Activated CD4-positive, alpha-beta memory T cell treated with anti-CD3 and anti-CD28 coated beads for 36 hours (primary cell): ENCODE measurements at regions of chr4 and their contacts with region 1.

Region 1: DNA sequence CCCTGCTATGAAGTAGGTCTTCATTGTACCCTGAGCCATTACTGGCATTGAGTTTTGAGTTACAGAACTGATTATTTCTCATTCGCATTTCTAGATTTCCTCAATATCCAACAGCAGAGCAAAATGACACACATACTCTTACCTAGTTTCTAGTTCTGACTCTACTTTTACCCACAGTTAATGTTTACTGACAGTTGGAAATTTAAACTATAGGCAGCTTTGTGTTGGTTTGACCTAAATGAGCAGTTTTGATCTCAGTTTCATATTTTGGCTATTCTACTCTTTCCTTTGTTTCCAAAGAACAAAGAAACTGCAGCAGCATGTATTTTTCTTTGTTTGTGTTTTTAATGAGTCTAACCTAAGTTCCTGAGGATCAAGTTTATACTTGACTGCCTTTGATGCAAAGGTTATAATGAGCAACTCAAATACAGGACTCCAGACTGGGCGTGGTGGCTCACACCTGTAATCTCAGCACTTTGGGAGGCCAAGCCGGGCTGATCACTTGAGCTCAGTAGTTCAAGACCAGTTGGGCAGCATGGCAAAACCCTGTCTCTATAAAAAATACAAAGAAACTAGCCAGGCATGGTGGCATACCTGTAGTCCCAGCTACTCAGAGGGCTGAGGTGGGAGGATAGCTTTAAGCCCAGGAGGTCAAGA is 30.4 kb downstream of the TXK start:
- DNase-seq: peak; percentile 60
- H3K4me3 Mint-ChIP-seq: no peak overlapping the region
- H3K27ac Mint-ChIP-seq: peak overlapping the region; percentile 83
- H3K4me1 Mint-ChIP-seq: peaks cover 30% of the 10 kb centered on the region
- H3K27me3 Mint-ChIP-seq: no peaks in the 10 kb centered on the region

Region 2: DNA sequence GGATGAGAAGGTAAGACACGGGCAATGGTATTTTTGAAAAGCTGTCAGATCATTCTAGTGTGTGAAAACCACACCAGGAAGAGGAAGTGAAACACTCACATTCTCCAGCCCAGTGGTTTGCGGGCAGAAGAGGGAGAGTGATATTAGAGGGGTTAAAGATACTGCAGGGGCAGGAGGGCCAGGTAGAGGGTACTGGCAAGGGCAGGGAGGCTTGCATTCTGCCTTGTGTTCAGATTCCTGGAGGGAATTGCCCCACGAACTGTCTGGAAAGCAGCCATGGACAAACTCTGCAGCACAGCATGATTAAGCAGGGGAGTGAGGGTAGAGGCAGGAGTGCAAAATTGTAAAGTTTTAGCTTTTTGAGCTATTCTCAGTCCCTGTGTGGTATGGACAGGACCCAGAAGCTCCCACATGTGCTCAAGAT is 56.2 kb before region 1 on chr4:
- CTCF ChIA-PET with region 1: interaction called, 5 read pairs
- POLR2A ChIA-PET with region 1: no interaction called
- intact Hi-C with region 1: loop called (anchors 1 kb)
- DNase-seq: peak; percentile 91
- H3K4me3 Mint-ChIP-seq: no peak overlapping the region
- H3K27ac Mint-ChIP-seq: peak overlapping the region; percentile 15
- H3K4me1 Mint-ChIP-seq: peaks cover 52% of the 10 kb centered on the region
- H3K27me3 Mint-ChIP-seq: peaks cover 34% of the 10 kb centered on the region

Region 3: DNA sequence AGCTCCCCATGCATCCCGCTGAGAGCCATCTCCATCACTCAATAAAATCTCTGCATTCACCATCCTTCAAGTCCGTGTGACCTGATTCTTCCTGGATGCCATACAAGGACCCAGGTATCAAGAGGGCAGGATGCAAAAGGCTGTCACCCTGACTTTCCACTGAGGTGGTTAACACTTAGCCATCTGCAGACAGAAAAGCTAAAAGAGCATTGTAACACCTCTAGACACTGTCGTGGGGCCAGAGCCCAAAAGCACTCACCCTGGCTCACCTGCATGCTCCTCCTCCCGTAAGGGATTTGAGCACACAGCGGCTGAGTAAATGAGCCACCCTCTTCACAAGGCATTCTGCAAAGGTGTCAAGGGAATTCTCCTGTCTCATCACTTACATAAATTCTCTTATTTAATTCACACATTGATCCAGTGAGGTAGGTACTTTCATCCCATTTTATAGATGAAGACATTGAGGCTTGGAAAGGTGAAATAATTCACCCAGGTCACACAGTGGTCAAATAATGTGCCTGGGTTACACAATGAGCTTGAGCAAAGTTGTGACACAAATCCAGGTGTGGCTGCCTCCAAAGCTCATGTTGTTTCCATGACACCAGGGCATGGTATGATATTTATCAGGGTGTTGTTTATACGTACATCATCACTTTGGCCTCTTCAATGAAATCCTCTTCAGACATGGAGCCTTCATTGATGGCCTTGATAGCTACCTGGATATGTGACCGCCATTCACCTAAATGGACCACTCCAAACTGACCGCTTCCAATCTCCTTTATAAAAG is 17.6 kb before region 1 on chr4:
- CTCF ChIA-PET with region 1: interaction called, 4 read pairs
- POLR2A ChIA-PET with region 1: no interaction called
- intact Hi-C with region 1: loop called (anchors 2 kb)
- DNase-seq: no peak
- H3K4me3 Mint-ChIP-seq: no peak overlapping the region
- H3K27ac Mint-ChIP-seq: no peak overlapping the region
- H3K4me1 Mint-ChIP-seq: peaks cover 5% of the 10 kb centered on the region
- H3K27me3 Mint-ChIP-seq: no peaks in the 10 kb centered on the region

Region 4: GRCh38 chr4:48133669-48134068 is 30.1 kb after region 1 on chr4:
- CTCF ChIA-PET with region 1: interaction called, 78 read pairs
- POLR2A ChIA-PET with region 1: interaction called, 5 read pairs
- intact Hi-C with region 1: loop called (anchors 1 kb)
- DNase-seq: no peak
- H3K4me3 Mint-ChIP-seq: peak overlapping the region; percentile 80
- H3K27ac Mint-ChIP-seq: peak overlapping the region; percentile 95
- H3K4me1 Mint-ChIP-seq: peaks cover 85% of the 10 kb centered on the region
- H3K27me3 Mint-ChIP-seq: no peaks in the 10 kb centered on the region

Region 5: GRCh38 chr4:48157271-48157670 is 53.7 kb after region 1 on chr4:
- CTCF ChIA-PET with region 1: no interaction called
- POLR2A ChIA-PET with region 1: no interaction called
- intact Hi-C with region 1: no loop called
- DNase-seq: no peak
- H3K4me3 Mint-ChIP-seq: no peak overlapping the region
- H3K27ac Mint-ChIP-seq: no peak overlapping the region
- H3K4me1 Mint-ChIP-seq: peaks cover 12% of the 10 kb centered on the region
- H3K27me3 Mint-ChIP-seq: peaks cover 1% of the 10 kb centered on the region

Region 6: GRCh38 chr4:48167538-48168263 is 64.1 kb after region 1 on chr4:
- CTCF ChIA-PET with region 1: interaction called, 4 read pairs
- POLR2A ChIA-PET with region 1: no interaction called
- intact Hi-C with region 1: loop called (anchors 1 kb)
- DNase-seq: no peak
- H3K4me3 Mint-ChIP-seq: no peak overlapping the region
- H3K27ac Mint-ChIP-seq: no peak overlapping the region
- H3K4me1 Mint-ChIP-seq: peaks cover 12% of the 10 kb centered on the region
- H3K27me3 Mint-ChIP-seq: no peaks in the 10 kb centered on the region

Region 7: GRCh38 chr4:48380583-48381167 is 277.1 kb after region 1 on chr4:
- CTCF ChIA-PET with region 1: no interaction called
- POLR2A ChIA-PET with region 1: no interaction called
- intact Hi-C with region 1: no loop called
- DNase-seq: no peak
- H3K4me3 Mint-ChIP-seq: no peak overlapping the region
- H3K27ac Mint-ChIP-seq: no peak overlapping the region
- H3K4me1 Mint-ChIP-seq: no peaks in the 10 kb centered on the region
- H3K27me3 Mint-ChIP-seq: no peaks in the 10 kb centered on the region

Region 8: GRCh38 chr4:48588230-48589097 is 484.9 kb after region 1 on chr4:
- CTCF ChIA-PET with region 1: no interaction called
- POLR2A ChIA-PET with region 1: no interaction called
- intact Hi-C with region 1: no loop called
- DNase-seq: no peak
- H3K4me3 Mint-ChIP-seq: no peak overlapping the region
- H3K27ac Mint-ChIP-seq: peak overlapping the region; percentile 65
- H3K4me1 Mint-ChIP-seq: peaks cover 10% of the 10 kb centered on the region
- H3K27me3 Mint-ChIP-seq: no peaks in the 10 kb centered on the region